PC-3 (cell line): ENCODE measurements at regions of chr1 and their contacts with region 1.

Region 1: DNA sequence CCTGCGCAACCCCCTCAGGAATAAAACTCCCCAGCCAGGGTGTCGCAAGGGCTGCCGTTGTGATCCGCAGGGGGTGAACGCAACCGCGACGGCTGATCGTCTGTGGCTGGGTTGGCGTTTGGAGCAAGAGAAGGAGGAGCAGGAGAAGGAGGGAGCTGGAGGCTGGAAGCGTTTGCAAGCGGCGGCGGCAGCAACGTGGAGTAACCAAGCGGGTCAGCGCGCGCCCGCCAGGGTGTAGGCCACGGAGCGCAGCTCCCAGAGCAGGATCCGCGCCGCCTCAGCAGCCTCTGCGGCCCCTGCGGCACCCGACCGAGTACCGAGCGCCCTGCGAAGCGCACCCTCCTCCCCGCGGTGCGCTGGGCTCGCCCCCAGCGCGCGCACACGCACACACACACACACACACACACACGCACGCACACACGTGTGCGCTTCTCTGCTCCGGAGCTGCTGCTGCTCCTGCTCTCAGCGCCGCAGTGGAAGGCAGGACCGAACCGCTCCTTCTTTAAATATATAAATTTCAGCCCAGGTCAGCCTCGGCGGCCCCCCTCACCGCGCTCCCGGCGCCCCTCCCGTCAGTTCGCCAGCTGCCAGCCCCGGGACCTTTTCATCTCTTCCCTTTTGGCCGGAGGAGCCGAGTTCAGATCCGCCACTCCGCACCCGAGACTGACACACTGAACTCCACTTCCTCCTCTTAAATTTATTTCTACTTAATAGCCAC is 696 bp downstream of the TGFB2 start:
- DNase-seq: peak; percentile 89
- ATAC-seq: peak; percentile 53
- H3K4me3 ChIP-seq: peak overlapping the region; percentile 78
- H3K27ac ChIP-seq: peak overlapping the region; percentile 84
- H3K4me1 ChIP-seq: peaks cover 35% of the 10 kb centered on the region
- H3K27me3 ChIP-seq: no peaks in the 10 kb centered on the region
- CTCF ChIP-seq: no peak

Region 2: DNA sequence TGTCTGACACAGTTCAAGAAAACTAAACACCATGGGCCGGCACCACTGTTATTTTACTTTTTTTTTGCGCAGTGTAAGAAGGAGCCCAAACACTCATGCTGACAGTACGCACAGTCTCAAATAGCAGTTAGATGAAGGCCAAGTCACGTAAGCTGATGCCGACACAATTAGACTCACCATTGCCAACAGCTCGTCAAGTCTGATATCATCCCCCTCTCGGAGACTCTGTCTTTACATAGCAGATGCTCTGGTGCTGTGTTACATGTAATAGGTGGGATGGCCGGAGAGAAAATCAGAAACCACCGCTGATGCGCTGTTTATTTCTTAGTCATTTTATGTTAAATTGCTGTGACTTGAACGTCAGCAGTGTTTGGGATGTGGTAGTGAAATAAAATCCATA is 48.6 kb after region 1 on chr1:
- CTCF ChIA-PET with region 1: no interaction called
- POLR2A ChIA-PET with region 1: no interaction called
- intact Hi-C with region 1: no loop called
- DNase-seq: no peak
- ATAC-seq: no peak
- H3K4me3 ChIP-seq: no peak overlapping the region
- H3K27ac ChIP-seq: no peak overlapping the region
- H3K4me1 ChIP-seq: peaks cover 27% of the 10 kb centered on the region
- H3K27me3 ChIP-seq: no peaks in the 10 kb centered on the region
- CTCF ChIP-seq: no peak

Region 3: GRCh38 chr1:218459878-218460711 is 114.3 kb after region 1 on chr1:
- CTCF ChIA-PET with region 1: no interaction called
- POLR2A ChIA-PET with region 1: no interaction called
- intact Hi-C with region 1: loop called (anchors 1 kb)
- DNase-seq: peak; percentile 99
- ATAC-seq: peak; percentile 95
- H3K4me3 ChIP-seq: peak overlapping the region; percentile 31
- H3K27ac ChIP-seq: peak overlapping the region; percentile 56
- H3K4me1 ChIP-seq: peaks cover 38% of the 10 kb centered on the region
- H3K27me3 ChIP-seq: no peaks in the 10 kb centered on the region
- CTCF ChIP-seq: no peak

Region 4: GRCh38 chr1:218592688-218593087 is 246.9 kb after region 1 on chr1:
- CTCF ChIA-PET with region 1: no interaction called
- POLR2A ChIA-PET with region 1: no interaction called
- intact Hi-C with region 1: loop called (anchors 2 kb)
- DNase-seq: peak; percentile 93
- ATAC-seq: peak; percentile 90
- H3K4me3 ChIP-seq: no peak overlapping the region; the same call in 1 of the 2 replicates
- H3K27ac ChIP-seq: peak overlapping the region; percentile 55
- H3K4me1 ChIP-seq: peaks cover 19% of the 10 kb centered on the region
- H3K27me3 ChIP-seq: no peaks in the 10 kb centered on the region
- CTCF ChIP-seq: no peak

Region 5: GRCh38 chr1:218772575-218772974 is 426.7 kb after region 1 on chr1:
- CTCF ChIA-PET with region 1: no interaction called
- POLR2A ChIA-PET with region 1: no interaction called
- intact Hi-C with region 1: loop called (anchors 10 kb)
- DNase-seq: peak; percentile 68
- ATAC-seq: peak; percentile 53
- H3K4me3 ChIP-seq: no peak overlapping the region
- H3K27ac ChIP-seq: no peak overlapping the region
- H3K4me1 ChIP-seq: peaks cover 12% of the 10 kb centered on the region
- H3K27me3 ChIP-seq: no peaks in the 10 kb centered on the region
- CTCF ChIP-seq: no peak

Region 6: GRCh38 chr1:219173758-219174588 is 828.1 kb after region 1 on chr1 and contains the start of gene LYPLAL1:
- CTCF ChIA-PET with region 1: interaction called, 6 read pairs
- POLR2A ChIA-PET with region 1: no interaction called
- intact Hi-C with region 1: loop called (anchors 5 kb)
- DNase-seq: peak; percentile 98
- ATAC-seq: peak; percentile 75
- H3K4me3 ChIP-seq: peak within 1 kb of the TSS; percentile 69
- H3K27ac ChIP-seq: peak within 1 kb of the TSS; percentile 23
- H3K4me1 ChIP-seq: peaks cover 47% of the 10 kb centered on the region
- H3K27me3 ChIP-seq: no peaks in the 10 kb centered on the region
- CTCF ChIP-seq: peak; percentile 51; the same call in 1 of the 2 replicates
- total RNA-seq, gene LYPLAL1: 15.8 and 21.3 TPM in 2 replicates